Esophagus squamous epithelium (tissue), 5 donors: ENCODE measurements at regions of chr10 and their contacts with region 1.

Region 1: DNA sequence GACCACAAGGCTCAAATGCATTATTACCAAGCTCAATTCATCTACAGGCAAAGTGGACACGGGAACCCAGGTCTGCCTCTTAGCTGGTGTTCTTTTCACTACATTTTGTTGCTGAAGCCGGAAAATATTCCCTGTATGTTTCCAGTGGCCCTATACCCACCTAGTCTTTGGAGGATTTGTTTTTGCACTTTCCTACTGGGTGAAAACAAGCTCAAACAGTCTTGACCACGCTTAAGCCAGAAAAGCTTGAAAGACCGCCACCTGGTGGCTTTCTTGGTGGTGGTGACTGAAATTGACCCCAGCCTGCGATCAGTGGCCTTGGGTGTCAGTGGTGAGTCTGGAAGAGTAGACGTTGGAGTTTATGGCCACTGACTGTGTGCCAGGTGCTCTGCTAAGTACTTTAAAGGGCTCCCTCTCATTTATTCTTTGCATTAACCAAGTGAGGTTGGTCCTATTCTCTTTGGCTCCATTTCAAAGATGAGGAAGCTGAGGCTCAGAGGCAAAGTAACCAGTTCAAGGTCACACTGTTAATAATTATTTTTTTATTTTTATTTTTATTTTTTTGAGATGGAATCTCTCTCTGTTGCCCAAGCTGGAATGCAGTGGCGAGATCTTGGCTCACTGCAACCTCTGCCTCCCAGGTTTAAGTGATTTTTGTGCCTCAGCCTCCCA is 11.1 kb upstream of the CRTAC1 start:
- DNase-seq: no peak
- H3K4me3 ChIP-seq: no peak overlapping the region
- H3K27ac ChIP-seq: no peak overlapping the region
- H3K4me1 ChIP-seq: no peaks in the 10 kb centered on the region
- H3K27me3 ChIP-seq: peaks cover 0 to 90% (median 0%) of the 10 kb centered on the region in 4 donors
- CTCF ChIP-seq: peak; percentile 40 to 70 (median 60)
- POLR2A ChIP-seq: no peak

Region 2: DNA sequence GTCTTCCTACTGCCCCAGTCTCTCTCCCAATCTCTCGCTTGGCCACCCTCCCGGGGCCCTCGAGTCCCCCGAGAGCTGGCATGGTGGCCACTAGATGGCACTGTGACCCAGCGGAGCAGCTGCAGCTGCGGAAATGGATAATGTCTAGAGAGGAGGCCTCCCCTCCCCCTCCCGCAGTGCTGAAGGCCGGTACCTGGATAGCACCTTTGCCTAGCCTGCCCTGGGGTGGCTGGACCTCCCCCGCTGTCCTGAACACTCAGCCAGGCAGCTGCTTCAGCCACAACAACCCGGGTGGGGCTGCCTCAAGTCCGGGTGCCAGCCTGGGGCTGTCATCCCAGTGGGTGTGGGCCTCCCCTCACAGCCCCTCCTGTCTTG is 126.7 kb before region 1 on chr10:
- intact Hi-C with region 1: loop called (anchors 5 kb)
- DNase-seq: no peak
- H3K4me3 ChIP-seq: no peak overlapping the region
- H3K27ac ChIP-seq: no peak overlapping the region
- H3K4me1 ChIP-seq: peaks cover 19 to 35% (median 24%) of the 10 kb centered on the region in 3 donors
- H3K27me3 ChIP-seq: peaks cover 0 to 30% (median 0%) of the 10 kb centered on the region in 4 donors
- CTCF ChIP-seq: peak; percentile 69 to 92 (median 86)
- POLR2A ChIP-seq: no peak